Activated naive CD4-positive, alpha-beta T cell treated with anti-CD3 and anti-CD28 coated beads for 36 hours (primary cell): ENCODE measurements at regions of chr12 and their contacts with region 1.

Region 1: GRCh38 chr12:89019408-89020120 is 332.7 kb downstream of the DUSP6 start:
- DNase-seq: peak; percentile 86
- H3K4me3 Mint-ChIP-seq: no peak overlapping the region
- H3K27ac Mint-ChIP-seq: no peak overlapping the region
- H3K4me1 Mint-ChIP-seq: peaks cover 6% of the 10 kb centered on the region
- H3K27me3 Mint-ChIP-seq: peaks cover 3% of the 10 kb centered on the region

Region 2: DNA sequence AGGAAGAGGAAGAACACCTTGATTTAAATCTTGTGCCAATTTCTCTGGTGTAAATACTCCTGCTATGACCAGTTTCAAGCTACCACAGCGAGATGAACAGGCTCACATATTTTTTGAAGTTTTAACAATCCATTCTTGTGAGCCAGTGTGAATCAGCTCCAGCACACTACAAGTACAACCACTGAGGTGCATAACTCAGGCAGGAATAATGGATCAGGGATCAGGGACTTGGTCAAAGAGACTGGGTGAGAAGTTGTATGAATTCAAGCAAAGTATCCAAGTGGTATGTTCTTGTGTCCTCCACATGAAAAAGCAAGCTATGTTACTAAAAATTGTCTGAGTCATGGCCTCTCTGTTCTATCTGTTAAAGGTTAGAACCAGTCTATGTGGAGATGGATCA is 404.1 kb before region 1 on chr12:
- CTCF ChIA-PET with region 1: no interaction called
- intact Hi-C with region 1: no loop called
- DNase-seq: no peak
- H3K4me3 Mint-ChIP-seq: no peak overlapping the region
- H3K27ac Mint-ChIP-seq: no peak overlapping the region
- H3K4me1 Mint-ChIP-seq: no peaks in the 10 kb centered on the region
- H3K27me3 Mint-ChIP-seq: no peaks in the 10 kb centered on the region

Region 3: GRCh38 chr12:88793096-88793495 is 226.5 kb before region 1 on chr12:
- CTCF ChIA-PET with region 1: no interaction called
- intact Hi-C with region 1: no loop called
- DNase-seq: no peak
- H3K4me3 Mint-ChIP-seq: no peak overlapping the region
- H3K27ac Mint-ChIP-seq: no peak overlapping the region
- H3K4me1 Mint-ChIP-seq: no peaks in the 10 kb centered on the region
- H3K27me3 Mint-ChIP-seq: no peaks in the 10 kb centered on the region

Region 4: DNA sequence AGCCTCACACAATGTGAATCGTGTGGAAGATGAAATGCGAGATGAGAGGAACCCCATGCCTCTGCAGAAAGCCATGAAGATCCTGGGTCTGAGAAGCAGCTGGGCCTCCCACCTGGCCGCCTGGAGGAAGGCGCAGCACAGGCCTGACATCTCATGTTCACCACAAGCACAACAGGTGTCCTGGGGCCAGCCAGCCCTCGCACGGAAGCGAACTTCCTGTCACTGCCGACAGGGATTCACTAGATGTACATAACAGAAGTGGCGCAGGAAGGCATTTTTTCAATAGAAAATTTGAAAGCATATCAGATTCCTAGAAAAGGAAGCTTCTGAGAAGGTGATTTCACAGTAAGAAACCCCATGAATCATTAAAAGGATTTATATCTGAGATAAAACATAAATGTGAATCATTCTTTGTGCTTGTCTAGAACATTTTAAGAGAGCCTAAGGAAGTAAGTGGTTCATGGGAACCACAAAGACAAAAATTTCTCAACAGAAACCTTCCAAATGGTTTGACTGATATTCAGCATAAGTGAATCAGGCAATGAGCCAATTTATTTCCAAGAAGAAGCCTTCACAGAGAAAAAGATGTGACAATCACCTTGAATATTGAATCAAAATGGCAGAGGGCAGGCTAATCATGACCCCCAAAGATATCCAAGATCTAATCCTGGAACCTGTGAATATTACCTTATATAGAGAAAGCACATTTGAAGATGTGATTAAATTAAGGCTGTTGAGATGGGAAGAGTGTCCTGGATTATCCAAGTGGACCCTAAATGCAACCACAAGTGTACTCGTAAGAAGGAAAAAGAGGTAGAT is 20.8 kb after region 1 on chr12:
- CTCF ChIA-PET with region 1: interaction called, 41 read pairs
- intact Hi-C with region 1: loop called (anchors 1 kb)
- DNase-seq: peak; percentile 94
- H3K4me3 Mint-ChIP-seq: no peak overlapping the region
- H3K27ac Mint-ChIP-seq: peak overlapping the region; percentile 82
- H3K4me1 Mint-ChIP-seq: peaks cover 46% of the 10 kb centered on the region
- H3K27me3 Mint-ChIP-seq: no peaks in the 10 kb centered on the region

Region 5: GRCh38 chr12:89126712-89127111 is 107.1 kb after region 1 on chr12:
- CTCF ChIA-PET with region 1: no interaction called
- intact Hi-C with region 1: no loop called
- DNase-seq: no peak
- H3K4me3 Mint-ChIP-seq: no peak overlapping the region
- H3K27ac Mint-ChIP-seq: no peak overlapping the region
- H3K4me1 Mint-ChIP-seq: peaks cover 5% of the 10 kb centered on the region
- H3K27me3 Mint-ChIP-seq: no peaks in the 10 kb centered on the region

Region 6: GRCh38 chr12:89352492-89353187 is 333.1 kb after region 1 on chr12 and contains the start of gene DUSP6:
- CTCF ChIA-PET with region 1: interaction called, 3 read pairs
- intact Hi-C with region 1: loop called (anchors 1 kb)
- DNase-seq: peak; percentile 97
- H3K4me3 Mint-ChIP-seq: peak within 1 kb of the TSS; percentile 89
- H3K27ac Mint-ChIP-seq: peak within 1 kb of the TSS; percentile 92
- H3K4me1 Mint-ChIP-seq: peaks cover 29% of the 10 kb centered on the region
- H3K27me3 Mint-ChIP-seq: peaks cover 2% of the 10 kb centered on the region
- total RNA-seq, gene DUSP6: 24.8 to 26.1 TPM

Region 7: DNA sequence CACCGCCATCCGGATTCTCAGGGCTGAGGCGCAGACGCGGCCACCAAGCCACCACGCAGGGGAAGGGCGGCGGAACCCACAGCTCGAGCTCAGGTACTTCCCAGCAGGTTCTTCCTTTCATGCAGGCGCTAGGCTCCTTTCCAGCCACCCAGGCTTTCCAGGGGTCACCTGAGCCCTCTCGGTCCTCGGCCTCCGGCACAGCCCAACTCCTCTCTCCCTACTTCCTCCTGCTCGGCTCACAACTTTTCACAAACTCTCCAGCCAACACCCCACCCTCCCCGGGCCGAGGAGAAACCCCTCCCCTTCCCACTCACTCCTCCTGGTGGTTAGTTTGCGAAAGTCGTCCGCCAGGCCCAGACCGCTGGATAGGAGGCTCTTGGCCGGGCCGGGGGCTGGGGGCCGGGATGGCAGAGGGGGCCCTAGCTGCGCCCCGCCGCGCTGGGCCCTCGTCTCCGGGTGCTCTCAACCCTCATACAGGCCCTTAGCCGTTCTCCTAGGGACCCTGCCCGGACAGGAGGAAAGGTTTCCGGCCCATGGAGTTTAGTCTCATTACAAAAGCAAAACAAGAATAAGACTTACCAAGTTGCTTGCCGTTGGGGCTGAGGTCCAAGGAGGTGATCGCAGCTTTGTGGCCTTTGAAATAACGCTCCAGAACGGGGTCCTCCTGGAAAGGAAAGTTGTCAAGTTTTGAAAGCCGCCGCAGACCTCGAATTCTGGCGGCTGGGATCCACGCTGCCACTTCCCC is 505.1 kb after region 1 on chr12 and contains the start of gene GALNT4:
- CTCF ChIA-PET with region 1: interaction called, 34 read pairs
- intact Hi-C with region 1: loop called (anchors 1 kb)
- DNase-seq: peak; percentile 80
- H3K4me3 Mint-ChIP-seq: peak within 1 kb of the TSS; percentile 94
- H3K27ac Mint-ChIP-seq: peak within 1 kb of the TSS; percentile 93
- H3K4me1 Mint-ChIP-seq: peaks cover 41% of the 10 kb centered on the region
- H3K27me3 Mint-ChIP-seq: no peaks in the 10 kb centered on the region
- total RNA-seq, gene GALNT4: 2.9 to 3.4 TPM

Region 8: GRCh38 chr12:89756585-89757321 is 737.2 kb after region 1 on chr12:
- CTCF ChIA-PET with region 1: no interaction called
- intact Hi-C with region 1: loop called (anchors 5 kb)
- DNase-seq: peak; percentile 48
- H3K4me3 Mint-ChIP-seq: no peak overlapping the region
- H3K27ac Mint-ChIP-seq: peak overlapping the region; percentile 37
- H3K4me1 Mint-ChIP-seq: peaks cover 23% of the 10 kb centered on the region
- H3K27me3 Mint-ChIP-seq: no peaks in the 10 kb centered on the region

Region 9: GRCh38 chr12:90940872-90941499 is 1921.4 kb after region 1 on chr12:
- CTCF ChIA-PET with region 1: no interaction called
- intact Hi-C with region 1: loop called (anchors 1 kb)
- DNase-seq: no peak
- H3K4me3 Mint-ChIP-seq: no peak overlapping the region
- H3K27ac Mint-ChIP-seq: no peak overlapping the region
- H3K4me1 Mint-ChIP-seq: no peaks in the 10 kb centered on the region
- H3K27me3 Mint-ChIP-seq: peaks cover 11% of the 10 kb centered on the region